ENCODE measurements at regions of chr2 and their contacts with region 1.

Region 1: DNA sequence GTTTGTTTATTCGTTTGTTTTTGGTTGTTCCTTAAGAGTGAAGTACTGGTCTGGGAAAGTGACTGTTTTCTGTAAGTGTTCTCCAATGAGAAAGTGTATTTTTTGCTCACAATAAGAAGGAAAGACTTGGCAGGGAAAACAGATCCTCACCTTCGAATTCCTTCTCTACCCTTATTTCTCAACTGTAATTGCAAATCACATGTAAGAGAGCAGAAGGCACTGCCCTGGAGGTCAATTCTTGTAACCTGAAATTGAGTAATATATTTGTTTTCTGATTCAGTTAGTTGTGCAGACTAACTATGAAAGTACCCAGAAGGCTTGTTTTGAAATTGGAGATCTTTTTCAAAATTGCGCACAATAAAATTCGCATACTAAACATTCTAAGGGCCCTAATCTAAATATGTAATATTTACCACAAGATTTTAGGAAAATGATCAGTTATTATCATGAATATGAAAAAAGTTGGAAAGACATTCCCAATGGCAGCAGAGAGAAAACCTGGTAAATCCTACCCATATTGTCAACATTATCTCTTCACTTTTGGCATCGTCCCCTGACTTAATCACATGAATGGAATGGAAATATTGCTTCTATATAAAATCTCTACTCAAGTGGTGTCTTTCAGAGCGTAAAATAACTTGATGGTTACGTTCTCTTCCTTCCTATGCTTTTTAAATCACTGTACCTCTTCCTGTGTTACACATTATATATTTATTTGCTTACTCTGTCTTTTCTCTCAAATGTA is 24.1 kb downstream of the TFPI start:
- DNase-seq: peak; percentile 91
- H3K4me3 Mint-ChIP-seq: peak overlapping the region; percentile 59
- H3K27ac Mint-ChIP-seq: peak overlapping the region; percentile 82
- H3K4me1 Mint-ChIP-seq: peaks cover 34% of the 10 kb centered on the region
- H3K27me3 Mint-ChIP-seq: no peaks in the 10 kb centered on the region
- CTCF ChIP-seq: no peak

Region 2: GRCh38 chr2:187541086-187542085 is 11.2 kb after region 1 on chr2:
- CTCF ChIA-PET with region 1: interaction called, 10 read pairs
- POLR2A ChIA-PET with region 1: interaction called, 73 read pairs
- intact Hi-C with region 1: loop called (anchors 2 kb)
- DNase-seq: peak; percentile 94
- H3K4me3 Mint-ChIP-seq: peak overlapping the region; percentile 42
- H3K27ac Mint-ChIP-seq: peak overlapping the region; percentile 94
- H3K4me1 Mint-ChIP-seq: peaks cover 38% of the 10 kb centered on the region
- H3K27me3 Mint-ChIP-seq: no peaks in the 10 kb centered on the region
- CTCF ChIP-seq: no peak

Region 3: GRCh38 chr2:187547353-187547979 is 17.3 kb after region 1 on chr2:
- CTCF ChIA-PET with region 1: interaction called, 11 read pairs
- POLR2A ChIA-PET with region 1: interaction called, 73 read pairs
- intact Hi-C with region 1: loop called (anchors 2 kb)
- DNase-seq: peak; percentile 88
- H3K4me3 Mint-ChIP-seq: peak overlapping the region; percentile 16
- H3K27ac Mint-ChIP-seq: peak overlapping the region; percentile 98
- H3K4me1 Mint-ChIP-seq: peaks cover 49% of the 10 kb centered on the region
- H3K27me3 Mint-ChIP-seq: no peaks in the 10 kb centered on the region
- CTCF ChIP-seq: no peak

Measured in MCF 10A (cell line).